ENCODE measurements at regions of chr5 and their contacts with region 1.

Region 1: GRCh38 chr5:174951146-174951780 is 226.9 kb downstream of the MSX2 start:
- DNase-seq: peak; percentile 75
- H3K4me3 ChIP-seq: no peak overlapping the region; a peak in 1 of 4 replicates
- H3K27ac ChIP-seq: no peak overlapping the region
- H3K4me1 ChIP-seq: no peaks in the 10 kb centered on the region
- H3K27me3 ChIP-seq: no peaks in the 10 kb centered on the region
- CTCF ChIP-seq: peak; percentile 87
- EP300 ChIP-seq: no peak
- RAD21 ChIP-seq: peak; percentile 94

Region 2: DNA sequence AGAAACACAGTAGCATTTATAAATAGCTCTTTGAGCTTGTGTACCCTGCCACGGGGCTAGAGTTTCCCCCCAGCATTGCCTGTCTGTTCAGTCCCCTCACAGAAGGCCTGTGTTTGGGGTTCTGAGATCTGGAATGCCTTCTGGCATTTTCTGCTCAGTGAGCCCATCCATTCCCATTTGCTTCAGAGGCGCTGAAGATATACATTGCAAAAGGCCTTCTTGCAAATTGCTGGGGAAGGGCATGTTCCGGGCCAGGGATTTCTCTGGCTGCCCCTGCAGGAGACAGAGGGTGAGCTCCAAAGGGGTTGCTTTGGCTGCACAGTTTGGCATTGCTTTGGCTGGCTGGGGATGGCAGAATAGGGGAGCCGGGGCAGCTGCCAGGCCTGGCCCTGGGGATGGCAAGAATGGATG is 81.5 kb after region 1 on chr5:
- CTCF ChIA-PET with region 1: no interaction called
- POLR2A ChIA-PET with region 1: no interaction called
- DNase-seq: no peak
- H3K4me3 ChIP-seq: no peak overlapping the region
- H3K27ac ChIP-seq: no peak overlapping the region
- H3K4me1 ChIP-seq: no peaks in the 10 kb centered on the region
- H3K27me3 ChIP-seq: no peaks in the 10 kb centered on the region
- CTCF ChIP-seq: no peak
- EP300 ChIP-seq: no peak
- RAD21 ChIP-seq: no peak

Region 3: DNA sequence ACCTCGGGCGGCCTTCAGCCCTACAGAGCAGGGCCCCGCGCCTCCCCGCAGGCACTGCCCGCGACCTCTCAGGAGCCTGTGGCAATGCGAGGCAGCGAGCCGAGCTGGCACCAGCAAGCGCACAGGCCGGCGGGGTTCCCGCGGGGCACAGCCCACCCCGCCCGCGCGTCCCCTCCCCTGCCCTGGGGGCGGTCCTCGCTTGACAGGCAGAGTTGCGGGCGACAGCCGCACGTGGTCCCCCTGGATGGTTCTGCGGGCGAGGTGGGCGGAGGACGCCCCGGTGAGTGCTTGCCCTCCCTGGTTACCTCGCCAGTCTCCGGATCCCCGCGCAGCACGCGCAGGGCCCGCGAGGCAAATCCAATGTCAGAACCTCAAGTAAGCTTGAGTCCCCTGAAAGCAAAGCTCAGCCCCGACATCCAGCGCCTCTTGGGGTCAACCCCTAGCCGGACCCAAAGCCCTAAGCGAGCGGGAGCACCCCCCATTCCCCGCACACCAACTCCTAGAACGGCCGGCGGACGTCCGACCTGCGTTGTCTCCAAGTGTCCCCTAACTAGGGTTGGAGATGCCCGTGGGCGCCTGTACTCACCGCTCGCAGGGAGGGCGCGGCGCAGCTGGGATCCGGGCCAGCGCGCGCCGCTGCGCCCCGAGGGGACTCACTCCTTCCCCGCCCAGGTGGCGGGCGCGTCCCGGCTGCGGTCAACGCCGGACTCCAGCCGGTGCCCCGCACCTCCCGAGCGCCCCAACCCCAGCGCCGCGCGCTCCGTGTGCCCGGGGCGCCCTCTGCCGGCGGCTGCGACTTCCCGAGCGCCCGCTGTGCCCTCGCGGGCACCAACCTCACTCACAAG is 493.0 kb after region 1 on chr5 and contains the start of gene DRD1:
- CTCF ChIA-PET with region 1: interaction called, 20 read pairs
- POLR2A ChIA-PET with region 1: no interaction called
- DNase-seq: peak; percentile 84
- H3K4me3 ChIP-seq: peak within 1 kb of the TSS; percentile 32 to 35; a peak in 2 of 4 replicates
- H3K27ac ChIP-seq: no peak within 1 kb of the TSS
- H3K4me1 ChIP-seq: no peaks in the 10 kb centered on the region; a peak in 1 of 4 replicates
- H3K27me3 ChIP-seq: peaks cover 38% of the 10 kb centered on the region; the same call in 1 of the 2 replicates
- CTCF ChIP-seq: peak; percentile 72
- EP300 ChIP-seq: no peak
- RAD21 ChIP-seq: peak; percentile 65
- polyA plus RNA-seq, gene DRD1: 0.02 TPM in 1 of 2 replicates, not detected in the other